T-cell (primary cell): ENCODE measurements at regions of chr3 and their contacts with region 1.

Region 1: GRCh38 chr3:197613199-197613598 is 57.4 kb upstream of the BDH1 start:
- DNase-seq: peak in 33 of 35 experiments; percentile 22 to 82 (median 61)
- ATAC-seq: peak; percentile 89 to 98 (median 96)
- H3K4me3 ChIP-seq: no peak overlapping the region
- H3K4me3 Mint-ChIP-seq: peak overlapping the region; percentile 0 to 30 (median 7)
- H3K27ac ChIP-seq: peak overlapping the region; percentile 63
- H3K27ac Mint-ChIP-seq: peak overlapping the region; percentile 92 to 94
- H3K4me1 ChIP-seq: peaks cover 15 to 18% of the 10 kb centered on the region in 2 experiments
- H3K4me1 Mint-ChIP-seq: peaks cover 21 to 32% (median 30%) of the 10 kb centered on the region in 3 donors
- H3K27me3 ChIP-seq: no peaks in the 10 kb centered on the region
- H3K27me3 Mint-ChIP-seq: no peaks in the 10 kb centered on the region

Region 2: DNA sequence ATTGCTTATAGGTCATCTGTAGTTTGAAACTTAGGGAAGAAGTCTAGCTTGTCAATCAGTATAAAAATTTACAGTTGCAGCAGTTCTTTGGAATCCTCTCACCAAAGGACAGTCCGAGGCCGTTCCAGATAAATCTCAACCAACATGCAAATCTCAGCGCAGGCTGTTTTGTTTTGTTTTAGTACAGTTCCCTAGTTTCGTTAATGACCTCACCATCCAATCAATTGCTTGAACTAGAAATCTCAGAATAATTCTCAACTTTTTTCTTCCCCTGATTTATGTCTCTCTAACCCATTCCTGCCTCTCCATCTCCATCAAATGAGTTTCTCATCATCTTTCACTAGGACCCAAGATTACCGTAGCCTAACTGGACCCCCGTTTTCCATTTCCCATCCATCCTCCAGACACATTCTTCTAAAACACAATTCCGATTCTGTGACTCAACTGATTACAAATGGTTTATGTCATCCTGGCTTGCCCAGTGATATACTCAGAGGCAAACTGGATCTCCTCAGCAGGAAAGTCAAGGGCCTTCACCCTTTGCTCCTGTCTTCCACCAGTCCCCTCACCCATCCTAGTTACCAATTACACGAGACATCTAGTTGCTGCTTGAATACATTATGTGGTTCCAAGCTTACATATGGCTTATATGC is 1099.4 kb before region 1 on chr3:
- CTCF ChIA-PET with region 1: interaction called in 1 of 2 experiments, 12 read pairs
- POLR2A ChIA-PET with region 1: no interaction called
- DNase-seq: no peak
- ATAC-seq: no peak
- H3K4me3 ChIP-seq: no peak overlapping the region
- H3K4me3 Mint-ChIP-seq: no peak overlapping the region
- H3K27ac ChIP-seq: no peak overlapping the region
- H3K27ac Mint-ChIP-seq: no peak overlapping the region
- H3K4me1 ChIP-seq: no peaks in the 10 kb centered on the region
- H3K4me1 Mint-ChIP-seq: peaks cover 0 to 4% (median 0%) of the 10 kb centered on the region in 3 donors
- H3K27me3 ChIP-seq: peaks cover 0 to 9% of the 10 kb centered on the region in 2 experiments
- H3K27me3 Mint-ChIP-seq: peaks cover 0 to 6% of the 10 kb centered on the region in 2 donors

Region 3: GRCh38 chr3:197599089-197599765 is 14.0 kb before region 1 on chr3:
- CTCF ChIA-PET with region 1: interaction called, 3 to 18 read pairs
- POLR2A ChIA-PET with region 1: interaction called in 1 of 2 experiments, 16 read pairs
- DNase-seq: peak; percentile 54 to 87 (median 71)
- ATAC-seq: peak; percentile 92 to 99 (median 98)
- H3K4me3 ChIP-seq: no peak overlapping the region
- H3K4me3 Mint-ChIP-seq: no peak overlapping the region
- H3K27ac ChIP-seq: no peak overlapping the region
- H3K27ac Mint-ChIP-seq: peak overlapping the region in 1 of 2 donors; percentile 44
- H3K4me1 ChIP-seq: peaks cover 0 to 9% of the 10 kb centered on the region in 2 experiments
- H3K4me1 Mint-ChIP-seq: peaks cover 4 to 7% (median 4%) of the 10 kb centered on the region in 3 donors
- H3K27me3 ChIP-seq: peaks cover 0 to 2% of the 10 kb centered on the region in 2 experiments
- H3K27me3 Mint-ChIP-seq: no peaks in the 10 kb centered on the region

Region 4: GRCh38 chr3:197809356-197810020 is 196.3 kb after region 1 on chr3:
- CTCF ChIA-PET with region 1: no interaction called
- POLR2A ChIA-PET with region 1: interaction called in 1 of 2 experiments, 11 read pairs
- DNase-seq: no peak
- ATAC-seq: no peak
- H3K4me3 ChIP-seq: no peak overlapping the region
- H3K4me3 Mint-ChIP-seq: no peak overlapping the region
- H3K27ac ChIP-seq: no peak overlapping the region
- H3K27ac Mint-ChIP-seq: peak overlapping the region in 1 of 2 donors; percentile 63
- H3K4me1 ChIP-seq: peaks cover 0 to 3% of the 10 kb centered on the region in 2 experiments
- H3K4me1 Mint-ChIP-seq: peaks cover 38 to 49% (median 43%) of the 10 kb centered on the region in 3 donors
- H3K27me3 ChIP-seq: no peaks in the 10 kb centered on the region
- H3K27me3 Mint-ChIP-seq: no peaks in the 10 kb centered on the region